A549 (cell line): ENCODE measurements at regions of chr17 and their contacts with region 1.

Region 1: GRCh38 chr17:7351665-7352501 is at the start of gene KCTD11:
- DNase-seq: peak; percentile 91 to 96
- ATAC-seq: peak; percentile 57 to 79
- H3K4me3 ChIP-seq: peak within 1 kb of the TSS; percentile 70
- H3K27ac ChIP-seq: peak within 1 kb of the TSS; percentile 92 to 96
- H3K4me1 ChIP-seq: peaks cover 52% of the 10 kb centered on the region
- CTCF ChIP-seq: peak; percentile 60
- EP300 ChIP-seq: peak in 1 of 2 experiments; percentile 39; a peak in 1 of 5 replicates
- POLR2A ChIP-seq: peak; percentile 69
- RAD21 ChIP-seq: no peak
- polyA plus RNA-seq, gene KCTD11: 6.1 and 7.0 TPM in 2 replicates

Region 2: DNA sequence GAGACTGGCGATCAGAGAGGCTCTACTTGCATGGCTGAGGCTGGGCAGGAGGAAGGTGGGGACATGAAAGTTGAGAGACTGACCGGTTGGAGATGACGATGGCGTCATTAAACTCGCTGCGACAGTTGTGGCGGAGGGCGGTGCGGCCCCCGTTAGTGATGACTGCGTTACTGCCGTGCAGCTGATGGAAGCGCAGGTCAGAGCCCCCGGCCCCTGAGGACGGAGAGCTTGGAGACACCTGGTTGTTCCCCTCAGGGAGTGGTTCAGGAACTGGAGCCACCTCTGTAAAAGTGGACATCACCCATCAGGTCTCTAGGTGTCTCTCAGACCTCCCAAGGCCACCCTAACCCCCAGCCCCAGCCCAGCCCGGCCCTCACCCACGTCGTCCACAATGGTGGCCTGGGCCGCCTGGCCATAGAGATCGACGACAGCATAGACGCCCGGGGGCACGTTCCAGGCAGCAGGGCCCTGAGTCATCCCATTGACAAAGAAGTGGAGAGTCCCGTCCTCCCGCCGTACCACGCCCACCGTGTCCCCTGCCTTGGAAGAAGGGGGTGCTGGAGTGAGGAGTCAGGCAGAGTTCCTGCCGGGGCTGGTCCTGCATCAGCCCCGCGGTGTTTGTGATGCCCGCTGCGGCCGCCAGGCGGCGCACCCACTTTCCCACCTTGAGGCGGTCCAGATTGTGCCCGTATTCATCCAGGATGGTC is 28.0 kb before region 1 on chr17:
- CTCF ChIA-PET with region 1: interaction called, 433 read pairs
- POLR2A ChIA-PET with region 1: interaction called, 7 read pairs
- DNase-seq: peak; percentile 53 to 83
- ATAC-seq: peak; percentile 40 to 82; a peak in 5 of 6 replicates
- H3K4me3 ChIP-seq: no peak overlapping the region
- H3K27ac ChIP-seq: no peak overlapping the region
- H3K4me1 ChIP-seq: peaks cover 10% of the 10 kb centered on the region; the same call in 2 of the 3 replicates
- CTCF ChIP-seq: peak; percentile 78
- EP300 ChIP-seq: no peak
- POLR2A ChIP-seq: no peak
- RAD21 ChIP-seq: peak; percentile 44 to 58; a peak in 3 of 5 replicates

Region 3: GRCh38 chr17:7363311-7363710 is 11.4 kb after region 1 on chr17:
- CTCF ChIA-PET with region 1: interaction called, 154 read pairs
- POLR2A ChIA-PET with region 1: no interaction called
- DNase-seq: peak in 1 of 2 experiments; percentile 52
- ATAC-seq: peak; percentile 45 to 69; a peak in 4 of 6 replicates
- H3K4me3 ChIP-seq: no peak overlapping the region
- H3K27ac ChIP-seq: no peak overlapping the region
- H3K4me1 ChIP-seq: peaks cover 7% of the 10 kb centered on the region; the same call in 2 of the 3 replicates
- CTCF ChIP-seq: no peak
- EP300 ChIP-seq: no peak
- POLR2A ChIP-seq: no peak
- RAD21 ChIP-seq: no peak

Region 4: GRCh38 chr17:7426896-7427489 is 75.1 kb after region 1 on chr17:
- CTCF ChIA-PET with region 1: interaction called, 232 read pairs
- POLR2A ChIA-PET with region 1: no interaction called
- DNase-seq: no peak
- ATAC-seq: peak in 1 of 2 experiments; percentile 7; a peak in 1 of 6 replicates
- H3K4me3 ChIP-seq: no peak overlapping the region
- H3K27ac ChIP-seq: no peak overlapping the region
- H3K4me1 ChIP-seq: no peaks in the 10 kb centered on the region
- CTCF ChIP-seq: no peak
- EP300 ChIP-seq: no peak
- POLR2A ChIP-seq: no peak
- RAD21 ChIP-seq: no peak

Region 5: GRCh38 chr17:7484067-7484918 is 132.4 kb after region 1 on chr17 and contains the start of gene POLR2A:
- CTCF ChIA-PET with region 1: interaction called, 30 read pairs
- POLR2A ChIA-PET with region 1: interaction called, 3 read pairs
- DNase-seq: peak; percentile 99
- ATAC-seq: peak; percentile 67 to 82
- H3K4me3 ChIP-seq: peak within 1 kb of the TSS; percentile 70
- H3K27ac ChIP-seq: peak within 1 kb of the TSS; percentile 91 to 97
- H3K4me1 ChIP-seq: peaks cover 48% of the 10 kb centered on the region
- CTCF ChIP-seq: no peak
- EP300 ChIP-seq: peak in 1 of 2 experiments; percentile 27; a peak in 1 of 5 replicates
- POLR2A ChIP-seq: peak; percentile 99
- RAD21 ChIP-seq: no peak
- polyA plus RNA-seq, gene POLR2A: 22.8 and 57.1 TPM in 2 replicates

Region 6: GRCh38 chr17:7548585-7549400 is 196.9 kb after region 1 on chr17 and contains the start of gene TNFSF12:
- CTCF ChIA-PET with region 1: interaction called, 13 read pairs
- POLR2A ChIA-PET with region 1: no interaction called
- DNase-seq: peak in 1 of 2 experiments; percentile 42
- ATAC-seq: peak; percentile 89
- H3K4me3 ChIP-seq: peak within 1 kb of the TSS; percentile 63
- H3K27ac ChIP-seq: peak within 1 kb of the TSS; percentile 81 to 90
- H3K4me1 ChIP-seq: peaks cover 17% of the 10 kb centered on the region
- CTCF ChIP-seq: peak; percentile 19; the same call in 1 of the 3 replicates
- EP300 ChIP-seq: no peak
- POLR2A ChIP-seq: peak; percentile 82
- RAD21 ChIP-seq: no peak
- polyA plus RNA-seq, gene TNFSF12: 11.9 and 12.4 TPM in 2 replicates